ENCODE measurements at regions of chr6 and their contacts with region 1.

Region 1: GRCh38 chr6:45714741-45715507 is 300.7 kb downstream of the CLIC5 start:
- DNase-seq: peak in 1 of 2 donors; percentile 66
- H3K4me3 ChIP-seq: peak overlapping the region in 1 of 2 donors; percentile 17
- H3K27ac ChIP-seq: no peak overlapping the region
- H3K4me1 ChIP-seq: peaks cover 0 to 3% of the 10 kb centered on the region in 2 donors
- H3K27me3 ChIP-seq: no peaks in the 10 kb centered on the region
- CTCF ChIP-seq: peak; percentile 51 to 69 (median 52)

Region 2: GRCh38 chr6:44593539-44593944 is 1121.4 kb before region 1 on chr6:
- intact Hi-C with region 1: loop called (anchors 10 kb)
- DNase-seq: no peak
- H3K4me3 ChIP-seq: no peak overlapping the region
- H3K27ac ChIP-seq: no peak overlapping the region
- H3K4me1 ChIP-seq: no peaks in the 10 kb centered on the region
- H3K27me3 ChIP-seq: no peaks in the 10 kb centered on the region
- CTCF ChIP-seq: peak in 2 of 3 experiments; percentile 9 to 46